ENCODE measurements at regions of chr2 and their contacts with region 1.

Region 1: DNA sequence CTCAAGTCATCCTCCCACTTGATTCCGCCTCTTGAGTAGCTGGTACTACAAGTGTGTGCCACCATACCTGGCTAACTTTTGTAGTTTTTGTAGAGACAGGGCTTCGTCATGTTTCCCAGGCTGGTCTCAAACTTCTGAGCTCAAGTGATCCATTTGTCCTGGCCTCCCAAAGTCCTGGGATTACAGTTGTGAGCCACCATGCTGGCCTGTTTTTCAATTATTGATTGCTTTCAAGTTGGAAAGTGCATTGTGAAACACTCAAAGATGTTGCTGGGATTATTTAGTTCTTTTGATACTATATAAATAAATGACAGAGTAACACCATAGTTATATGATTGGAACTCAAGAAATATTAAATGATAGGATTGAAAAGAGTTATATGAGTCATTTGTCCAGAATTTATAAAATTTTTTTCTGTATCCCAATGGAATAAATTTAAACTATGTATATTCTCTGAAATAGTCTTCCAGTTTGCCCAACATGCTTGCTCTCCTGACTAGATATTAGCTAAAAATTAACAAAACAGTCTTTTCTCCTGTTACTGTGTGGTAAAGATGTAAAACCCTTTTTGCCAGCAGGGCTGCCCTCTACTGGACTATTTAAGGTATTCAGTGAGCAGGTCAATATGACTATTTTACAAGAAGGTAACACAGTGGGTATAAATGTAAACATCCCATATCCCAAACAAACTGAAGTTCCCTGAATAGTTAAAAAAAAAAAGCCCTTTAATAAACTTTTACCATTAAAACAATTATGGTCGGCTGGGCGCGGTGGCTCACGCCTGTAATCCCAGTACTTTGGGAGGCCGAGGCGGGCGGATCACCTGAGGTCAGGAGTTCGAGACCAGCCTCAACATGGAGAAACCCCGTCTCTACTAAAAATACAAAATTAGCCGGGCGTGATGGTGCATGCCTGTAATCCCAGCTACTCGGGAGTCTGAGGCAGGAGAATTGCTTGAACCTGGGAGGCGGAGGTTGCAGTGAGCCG is 42.7 kb downstream of the ACSL3 start:
- DNase-seq: peak in 5 of 9 experiments; percentile 15 to 62 (median 26)
- ATAC-seq: no peak
- H3K4me3 ChIP-seq: no peak overlapping the region
- H3K4me3 Mint-ChIP-seq: no peak overlapping the region
- H3K27ac ChIP-seq: no peak overlapping the region
- H3K27ac Mint-ChIP-seq: no peak overlapping the region
- H3K4me1 ChIP-seq: no peaks in the 10 kb centered on the region
- H3K4me1 Mint-ChIP-seq: peaks cover 42% of the 10 kb centered on the region
- H3K27me3 ChIP-seq: no peaks in the 10 kb centered on the region
- H3K27me3 Mint-ChIP-seq: no peaks in the 10 kb centered on the region
- CTCF ChIP-seq: peak; percentile 81

Region 2: GRCh38 chr2:222305516-222306392 is 597.8 kb before region 1 on chr2:
- CTCF ChIA-PET with region 1: no interaction called
- POLR2A ChIA-PET with region 1: no interaction called
- intact Hi-C with region 1: no loop called
- DNase-seq: no peak
- ATAC-seq: no peak
- H3K4me3 ChIP-seq: peak overlapping the region; percentile 12 to 35
- H3K4me3 Mint-ChIP-seq: peak overlapping the region; percentile 51
- H3K27ac ChIP-seq: no peak overlapping the region
- H3K27ac Mint-ChIP-seq: no peak overlapping the region
- H3K4me1 ChIP-seq: peaks cover 9% of the 10 kb centered on the region
- H3K4me1 Mint-ChIP-seq: peaks cover 28% of the 10 kb centered on the region
- H3K27me3 ChIP-seq: peaks cover 42 to 53% of the 10 kb centered on the region in 2 experiments
- H3K27me3 Mint-ChIP-seq: peaks cover 82% of the 10 kb centered on the region
- CTCF ChIP-seq: no peak

Region 3: DNA sequence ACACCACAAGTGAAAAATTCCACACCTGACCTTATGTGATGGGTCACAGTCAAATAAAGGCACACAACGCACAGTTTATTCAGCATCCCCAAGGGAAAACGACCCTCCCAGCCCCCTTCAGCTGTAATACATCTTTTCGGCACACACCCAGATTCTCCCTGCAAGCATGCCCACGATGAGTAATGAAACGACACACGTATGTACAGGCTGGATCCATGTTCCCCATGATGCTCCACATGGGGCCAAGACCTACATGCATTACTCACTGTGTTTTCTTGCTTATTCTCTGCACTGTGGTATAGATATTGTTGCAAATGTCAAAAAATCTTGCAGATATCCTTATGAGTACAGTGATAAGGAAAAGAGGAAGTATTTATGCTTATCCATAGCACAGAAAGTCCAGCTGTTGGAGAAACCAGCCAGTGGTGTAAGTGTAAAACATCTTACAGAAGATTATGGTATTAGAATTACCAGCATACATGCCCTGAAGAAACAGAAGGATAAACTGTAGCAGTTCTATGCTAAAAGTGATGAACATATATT is 511.7 kb before region 1 on chr2:
- CTCF ChIA-PET with region 1: no interaction called
- POLR2A ChIA-PET with region 1: no interaction called
- intact Hi-C with region 1: no loop called
- DNase-seq: no peak
- ATAC-seq: no peak
- H3K4me3 ChIP-seq: no peak overlapping the region
- H3K4me3 Mint-ChIP-seq: no peak overlapping the region
- H3K27ac ChIP-seq: no peak overlapping the region
- H3K27ac Mint-ChIP-seq: no peak overlapping the region
- H3K4me1 ChIP-seq: no peaks in the 10 kb centered on the region
- H3K4me1 Mint-ChIP-seq: no peaks in the 10 kb centered on the region
- H3K27me3 ChIP-seq: no peaks in the 10 kb centered on the region
- H3K27me3 Mint-ChIP-seq: peaks cover 6% of the 10 kb centered on the region
- CTCF ChIP-seq: no peak

Region 4: DNA sequence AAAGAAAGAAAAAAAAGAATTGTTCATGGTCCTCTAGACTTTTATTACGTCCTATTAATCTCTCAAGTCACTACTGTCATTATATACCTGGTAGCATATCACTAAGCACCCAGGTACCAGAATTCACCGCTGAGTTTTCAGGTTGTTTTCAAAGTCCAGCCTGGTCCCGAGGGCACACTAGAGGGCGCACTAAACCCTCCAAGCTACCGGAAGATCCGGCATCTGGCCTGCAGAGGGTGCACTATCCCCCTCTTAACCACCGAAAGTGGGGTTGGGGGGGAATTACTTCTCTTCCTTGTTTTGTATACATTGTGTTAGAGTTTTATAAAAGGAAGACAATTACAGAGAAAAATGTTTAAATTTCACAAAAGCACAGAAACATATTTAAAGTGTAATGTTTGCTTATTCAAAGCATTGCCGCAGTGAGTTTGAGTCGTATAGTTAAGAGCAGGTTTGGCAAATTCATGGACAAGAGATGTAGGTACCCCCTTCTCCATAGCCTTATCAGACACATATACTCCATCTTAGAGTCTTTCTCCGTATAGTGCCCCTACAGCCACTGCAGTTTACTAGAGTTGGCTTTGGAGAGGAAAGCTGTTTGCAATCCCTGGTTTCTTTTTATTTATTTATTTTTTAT is 212.8 kb before region 1 on chr2:
- CTCF ChIA-PET with region 1: interaction called, 5 read pairs
- POLR2A ChIA-PET with region 1: no interaction called
- intact Hi-C with region 1: loop called in 1 of 2 experiments (anchors 1 kb)
- DNase-seq: peak; percentile 31 to 85 (median 74)
- ATAC-seq: peak; percentile 100
- H3K4me3 ChIP-seq: no peak overlapping the region
- H3K4me3 Mint-ChIP-seq: no peak overlapping the region
- H3K27ac ChIP-seq: no peak overlapping the region
- H3K27ac Mint-ChIP-seq: no peak overlapping the region
- H3K4me1 ChIP-seq: no peaks in the 10 kb centered on the region
- H3K4me1 Mint-ChIP-seq: peaks cover 9% of the 10 kb centered on the region
- H3K27me3 ChIP-seq: peaks cover 0 to 4% of the 10 kb centered on the region in 2 experiments
- H3K27me3 Mint-ChIP-seq: no peaks in the 10 kb centered on the region
- CTCF ChIP-seq: peak; percentile 100

Region 5: GRCh38 chr2:222707689-222708525 is 195.6 kb before region 1 on chr2:
- CTCF ChIA-PET with region 1: interaction called, 97 read pairs
- POLR2A ChIA-PET with region 1: no interaction called
- intact Hi-C with region 1: loop called in 1 of 2 experiments (anchors 1 kb)
- DNase-seq: peak; percentile 49 to 85 (median 71)
- ATAC-seq: peak; percentile 71
- H3K4me3 ChIP-seq: no peak overlapping the region
- H3K4me3 Mint-ChIP-seq: no peak overlapping the region
- H3K27ac ChIP-seq: no peak overlapping the region
- H3K27ac Mint-ChIP-seq: no peak overlapping the region
- H3K4me1 ChIP-seq: no peaks in the 10 kb centered on the region
- H3K4me1 Mint-ChIP-seq: no peaks in the 10 kb centered on the region
- H3K27me3 ChIP-seq: peaks cover 2 to 3% of the 10 kb centered on the region in 2 experiments
- H3K27me3 Mint-ChIP-seq: peaks cover 29% of the 10 kb centered on the region
- CTCF ChIP-seq: peak; percentile 99

Region 6: GRCh38 chr2:222797261-222797660 is 106.3 kb before region 1 on chr2:
- CTCF ChIA-PET with region 1: interaction called, 4 read pairs
- POLR2A ChIA-PET with region 1: no interaction called
- intact Hi-C with region 1: loop called (anchors 5 kb)
- DNase-seq: peak in 2 of 9 experiments; percentile 7 to 25
- ATAC-seq: no peak
- H3K4me3 ChIP-seq: no peak overlapping the region
- H3K4me3 Mint-ChIP-seq: no peak overlapping the region
- H3K27ac ChIP-seq: no peak overlapping the region
- H3K27ac Mint-ChIP-seq: no peak overlapping the region
- H3K4me1 ChIP-seq: no peaks in the 10 kb centered on the region
- H3K4me1 Mint-ChIP-seq: no peaks in the 10 kb centered on the region
- H3K27me3 ChIP-seq: no peaks in the 10 kb centered on the region
- H3K27me3 Mint-ChIP-seq: no peaks in the 10 kb centered on the region
- CTCF ChIP-seq: peak; percentile 42

Region 7: GRCh38 chr2:222860740-222861410 is 42.7 kb before region 1 on chr2 and contains the start of gene ACSL3:
- CTCF ChIA-PET with region 1: interaction called, 6 read pairs
- POLR2A ChIA-PET with region 1: interaction called, 3 read pairs
- intact Hi-C with region 1: loop called (anchors 5 kb)
- DNase-seq: peak; percentile 83 to 93 (median 92)
- ATAC-seq: peak; percentile 96
- H3K4me3 ChIP-seq: peak within 1 kb of the TSS; percentile 64 to 69
- H3K4me3 Mint-ChIP-seq: peak within 1 kb of the TSS; percentile 82
- H3K27ac ChIP-seq: peak within 1 kb of the TSS; percentile 69 to 80
- H3K27ac Mint-ChIP-seq: peak within 1 kb of the TSS; percentile 91
- H3K4me1 ChIP-seq: peaks cover 25% of the 10 kb centered on the region
- H3K4me1 Mint-ChIP-seq: peaks cover 7% of the 10 kb centered on the region
- H3K27me3 ChIP-seq: no peaks in the 10 kb centered on the region
- H3K27me3 Mint-ChIP-seq: no peaks in the 10 kb centered on the region
- CTCF ChIP-seq: no peak
- total RNA-seq, gene ACSL3: 89.5 to 97.6 TPM

Region 8: DNA sequence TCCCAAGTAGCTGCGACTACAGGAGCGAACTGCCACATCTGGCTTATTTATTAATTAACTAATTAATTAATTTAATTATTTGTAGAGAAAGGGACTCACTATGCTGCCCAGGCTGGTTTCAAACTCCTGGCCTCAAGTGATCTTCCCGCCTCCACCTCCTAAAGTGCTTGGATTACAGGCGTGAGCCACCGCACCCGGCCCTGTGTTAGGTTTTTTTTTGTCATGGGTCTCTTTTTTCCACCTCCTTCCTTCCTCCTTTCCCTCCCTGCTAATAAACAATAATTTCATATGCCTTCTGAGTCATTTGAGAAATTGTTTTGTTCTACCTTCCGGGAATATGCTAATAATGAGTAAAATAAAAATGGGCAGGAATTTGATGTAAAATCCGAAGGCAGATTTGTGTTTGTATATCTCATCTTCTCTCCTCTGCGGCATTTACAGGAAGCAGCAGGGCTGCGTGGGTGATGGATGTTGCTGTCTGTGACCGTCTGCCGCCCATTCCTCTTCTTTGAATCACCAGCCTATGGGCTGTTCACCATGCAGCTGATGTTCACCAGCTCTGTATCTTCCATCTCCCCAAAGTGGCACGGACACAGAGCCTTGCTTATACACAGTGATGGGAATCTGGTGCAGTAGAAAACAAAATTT is 47.2 kb after region 1 on chr2:
- CTCF ChIA-PET with region 1: no interaction called
- POLR2A ChIA-PET with region 1: no interaction called
- intact Hi-C with region 1: no loop called
- DNase-seq: no peak
- ATAC-seq: no peak
- H3K4me3 ChIP-seq: no peak overlapping the region
- H3K4me3 Mint-ChIP-seq: no peak overlapping the region
- H3K27ac ChIP-seq: no peak overlapping the region
- H3K27ac Mint-ChIP-seq: no peak overlapping the region
- H3K4me1 ChIP-seq: no peaks in the 10 kb centered on the region
- H3K4me1 Mint-ChIP-seq: no peaks in the 10 kb centered on the region
- H3K27me3 ChIP-seq: no peaks in the 10 kb centered on the region
- H3K27me3 Mint-ChIP-seq: peaks cover 17% of the 10 kb centered on the region
- CTCF ChIP-seq: no peak